ENCODE measurements at regions of chr1 and their contacts with region 1.

Region 1: DNA sequence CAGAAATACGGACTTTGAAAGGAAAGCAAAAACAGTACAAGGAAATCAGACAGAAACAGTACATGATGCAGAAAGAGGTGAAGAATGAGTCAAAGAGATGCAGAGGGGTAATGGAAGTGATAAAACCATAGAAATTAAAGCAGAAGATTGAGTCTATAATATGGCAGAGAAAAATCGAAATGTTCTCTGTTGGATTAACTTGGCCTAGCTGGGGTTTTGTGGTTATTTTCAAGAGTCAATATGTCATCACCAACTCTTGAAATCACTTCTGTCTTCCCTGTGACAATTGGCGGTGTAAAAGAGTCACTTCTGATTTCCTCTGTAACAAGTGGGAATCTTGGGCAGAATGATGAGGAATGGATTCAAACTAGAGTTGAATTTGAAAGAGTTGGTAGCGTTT is 7.4 kb downstream of the YTHDF2 start:
- DNase-seq: no peak

Region 2: DNA sequence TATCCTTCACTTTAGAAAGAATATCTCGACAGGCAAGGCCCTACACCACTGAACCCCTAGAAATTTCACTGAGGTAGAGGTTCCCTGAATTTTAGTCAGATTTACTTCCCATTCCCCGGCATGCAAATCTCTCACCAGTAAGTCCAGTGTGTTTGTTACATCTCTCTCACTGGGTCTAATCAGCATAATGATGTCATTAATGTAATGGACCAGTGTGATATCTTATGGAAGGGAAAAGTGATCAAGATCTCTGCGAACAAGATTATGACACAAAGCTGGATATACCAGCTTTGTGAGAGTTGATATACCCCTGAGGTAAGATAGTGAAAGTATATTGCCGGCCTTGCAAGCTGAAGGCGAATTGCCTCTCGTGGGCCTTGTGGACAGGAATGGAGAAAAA is 87.8 kb before region 1 on chr1:
- intact Hi-C with region 1: loop called in 1 of 2 experiments (anchors 10 kb)
- DNase-seq: no peak

Region 3: DNA sequence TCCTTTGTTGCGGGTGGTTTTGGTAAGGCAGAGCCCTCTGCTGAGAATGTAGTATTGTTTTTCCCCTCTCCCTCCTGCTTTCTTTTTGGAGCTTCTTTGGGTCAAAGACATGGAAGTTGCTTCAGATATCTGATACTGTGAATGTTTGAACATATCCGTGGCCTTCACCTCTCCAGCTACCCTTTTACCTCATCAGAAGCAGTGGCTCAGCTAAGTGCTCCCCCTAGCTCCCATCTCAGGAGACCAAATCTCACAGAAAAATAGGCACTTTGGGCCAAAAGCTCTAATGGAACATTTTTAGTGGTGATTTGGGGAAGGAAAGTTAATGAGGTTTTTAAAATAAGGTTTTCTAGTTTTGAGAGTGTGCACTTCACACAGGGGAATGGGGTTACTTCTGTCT is 373.2 kb after region 1 on chr1:
- intact Hi-C with region 1: no loop called
- DNase-seq: no peak

Region 4: GRCh38 chr1:29297450-29297849 is 553.3 kb after region 1 on chr1:
- intact Hi-C with region 1: loop called in 1 of 2 experiments (anchors 5 kb)
- DNase-seq: peak; percentile 5

Measured in posterior vena cava (tissue), 2 donors.